ENCODE measurements at regions of chr12 and their contacts with region 1.

Region 1: GRCh38 chr12:56688129-56688845 is at the start of gene PTGES3:
- DNase-seq: peak; percentile 93 to 99 (median 96)
- ATAC-seq: peak; percentile 74
- H3K4me3 ChIP-seq: peak within 1 kb of the TSS; percentile 97
- H3K27ac ChIP-seq: peak within 1 kb of the TSS; percentile 99
- H3K4me1 ChIP-seq: peaks cover 0 to 25% of the 10 kb centered on the region in 2 experiments; a peak in 4 of 5 replicates
- H3K27me3 ChIP-seq: no peaks in the 10 kb centered on the region
- CTCF ChIP-seq: 0 out of 6 replicates have a peak, but pooled peaks of 1 of the 3 experiments have one; percentile 10
- EP300 ChIP-seq: peak; percentile 57
- POLR2A ChIP-seq: peak; percentile 98
- RAD21 ChIP-seq: no peak
- polyA plus RNA-seq, gene PTGES3: 163 to 185 TPM

Region 2: DNA sequence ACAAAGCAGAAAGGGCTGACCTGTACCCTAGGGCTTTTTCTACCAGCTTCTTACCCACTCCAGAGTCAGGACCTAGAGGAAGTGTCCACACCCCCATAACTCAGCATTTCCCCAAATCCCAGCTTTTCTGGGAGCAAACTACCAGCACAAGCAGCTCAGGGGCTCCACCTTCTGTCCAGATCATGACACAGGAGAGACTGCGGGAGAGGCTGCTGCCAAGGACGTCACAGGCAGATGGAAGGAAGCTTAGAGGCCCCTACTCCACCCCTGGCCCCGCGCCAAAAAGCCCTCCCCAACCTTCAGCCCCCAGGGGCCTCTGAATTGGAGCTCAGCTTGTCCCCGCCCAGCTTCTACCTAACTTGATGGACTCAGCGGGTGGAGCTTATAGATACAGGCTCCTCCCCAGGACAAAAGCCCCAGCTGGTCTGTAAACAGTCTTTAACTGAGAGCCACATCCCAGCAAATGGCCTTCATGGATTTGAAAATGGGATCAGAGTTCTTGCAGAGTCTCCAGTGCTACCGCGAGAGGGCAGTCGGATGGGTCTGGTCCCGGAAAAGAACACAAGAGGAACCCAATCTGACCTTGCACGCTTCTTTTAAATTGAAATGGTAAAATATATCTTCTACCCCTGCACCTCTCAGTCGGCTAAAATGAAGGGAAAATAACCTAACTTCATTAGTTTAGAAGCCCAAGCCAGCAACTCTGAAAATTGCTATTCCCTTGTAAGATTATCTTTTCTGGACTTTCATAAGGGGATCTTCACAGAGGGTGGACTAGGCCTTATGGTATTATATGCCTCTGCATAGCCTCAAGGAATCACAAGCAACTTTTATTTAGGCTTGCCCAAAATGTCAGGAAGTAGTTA is 51.4 kb before region 1 on chr12:
- CTCF ChIA-PET with region 1: interaction called, 4 read pairs
- POLR2A ChIA-PET with region 1: interaction called, 19 read pairs
- in situ Hi-C with region 1: no loop called
- intact Hi-C with region 1: loop called (anchors 2 kb)
- DNase-seq: peak; percentile 90 to 100 (median 94)
- ATAC-seq: peak; percentile 84
- H3K4me3 ChIP-seq: peak overlapping the region; percentile 85
- H3K27ac ChIP-seq: peak overlapping the region; percentile 86
- H3K4me1 ChIP-seq: peaks cover 23 to 38% of the 10 kb centered on the region in 2 experiments
- H3K27me3 ChIP-seq: no peaks in the 10 kb centered on the region
- CTCF ChIP-seq: peak; percentile 79 to 91 (median 88)
- EP300 ChIP-seq: peak; percentile 62
- POLR2A ChIP-seq: peak; percentile 76
- RAD21 ChIP-seq: peak; percentile 66 to 87

Region 3: DNA sequence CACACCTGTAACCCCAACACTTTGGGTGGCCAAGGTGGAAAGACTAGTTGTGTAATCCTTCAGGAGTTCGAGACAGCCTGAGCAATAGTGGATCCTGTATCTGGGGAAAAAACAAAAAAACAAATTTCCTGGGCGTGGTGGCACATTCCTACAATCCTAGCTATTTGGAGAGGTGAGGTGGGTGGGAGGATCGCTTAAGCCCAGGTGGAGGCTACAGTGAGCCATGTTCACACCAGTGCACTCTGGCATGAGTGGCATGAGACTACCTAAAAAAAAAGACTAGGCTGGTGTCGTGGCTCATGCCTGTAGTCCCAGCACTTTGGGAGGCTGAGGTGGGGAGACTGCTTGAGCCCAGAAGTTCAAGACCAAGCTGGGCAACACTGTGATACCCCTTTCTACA is 17.5 kb before region 1 on chr12:
- CTCF ChIA-PET with region 1: no interaction called
- POLR2A ChIA-PET with region 1: interaction called, 28 read pairs
- in situ Hi-C with region 1: no loop called
- intact Hi-C with region 1: no loop called
- DNase-seq: no peak
- ATAC-seq: no peak
- H3K4me3 ChIP-seq: no peak overlapping the region
- H3K27ac ChIP-seq: no peak overlapping the region
- H3K4me1 ChIP-seq: peaks cover 6 to 25% of the 10 kb centered on the region in 2 experiments; a peak in 4 of 5 replicates
- H3K27me3 ChIP-seq: no peaks in the 10 kb centered on the region
- CTCF ChIP-seq: no peak
- EP300 ChIP-seq: no peak
- POLR2A ChIP-seq: no peak
- RAD21 ChIP-seq: no peak

Region 4: DNA sequence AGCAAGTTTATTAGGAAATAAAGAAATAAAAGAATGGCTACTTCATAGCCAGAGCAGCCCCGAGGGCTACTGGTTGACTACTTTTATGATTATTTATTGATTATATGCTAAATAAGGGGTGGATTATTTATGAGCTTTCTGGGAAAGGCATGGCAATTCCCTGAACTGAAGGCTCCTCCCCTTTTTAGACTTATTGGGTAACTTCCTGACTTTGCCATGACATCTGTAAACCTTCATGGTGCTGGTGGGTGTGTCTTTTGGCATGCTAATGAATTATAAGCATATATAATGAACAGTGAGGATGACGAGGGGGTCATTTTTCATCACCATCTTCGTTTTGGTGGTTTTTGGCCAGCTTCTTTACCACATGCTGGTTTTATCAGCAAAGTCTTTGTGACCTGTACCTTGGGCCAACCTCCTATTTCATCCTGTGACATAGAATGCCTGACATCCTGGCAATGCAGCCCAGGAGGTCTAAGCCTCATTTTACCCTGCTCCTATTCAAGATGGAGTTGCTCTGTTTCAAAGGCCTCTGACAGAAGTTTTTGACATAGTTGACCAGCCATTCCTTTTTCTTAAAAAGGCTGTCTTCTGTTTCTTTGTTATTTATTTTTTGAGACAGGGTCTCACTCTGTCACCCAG is 10.9 kb after region 1 on chr12:
- CTCF ChIA-PET with region 1: no interaction called
- POLR2A ChIA-PET with region 1: interaction called, 13 read pairs
- in situ Hi-C with region 1: no loop called
- intact Hi-C with region 1: loop called (anchors 1 kb)
- DNase-seq: peak in 2 of 4 experiments; percentile 58 to 81
- ATAC-seq: peak; percentile 79
- H3K4me3 ChIP-seq: no peak overlapping the region
- H3K27ac ChIP-seq: peak overlapping the region; percentile 80
- H3K4me1 ChIP-seq: peaks cover 28 to 35% of the 10 kb centered on the region in 2 experiments
- H3K27me3 ChIP-seq: no peaks in the 10 kb centered on the region
- CTCF ChIP-seq: no peak
- EP300 ChIP-seq: peak; percentile 36
- POLR2A ChIP-seq: no peak
- RAD21 ChIP-seq: no peak

Region 5: DNA sequence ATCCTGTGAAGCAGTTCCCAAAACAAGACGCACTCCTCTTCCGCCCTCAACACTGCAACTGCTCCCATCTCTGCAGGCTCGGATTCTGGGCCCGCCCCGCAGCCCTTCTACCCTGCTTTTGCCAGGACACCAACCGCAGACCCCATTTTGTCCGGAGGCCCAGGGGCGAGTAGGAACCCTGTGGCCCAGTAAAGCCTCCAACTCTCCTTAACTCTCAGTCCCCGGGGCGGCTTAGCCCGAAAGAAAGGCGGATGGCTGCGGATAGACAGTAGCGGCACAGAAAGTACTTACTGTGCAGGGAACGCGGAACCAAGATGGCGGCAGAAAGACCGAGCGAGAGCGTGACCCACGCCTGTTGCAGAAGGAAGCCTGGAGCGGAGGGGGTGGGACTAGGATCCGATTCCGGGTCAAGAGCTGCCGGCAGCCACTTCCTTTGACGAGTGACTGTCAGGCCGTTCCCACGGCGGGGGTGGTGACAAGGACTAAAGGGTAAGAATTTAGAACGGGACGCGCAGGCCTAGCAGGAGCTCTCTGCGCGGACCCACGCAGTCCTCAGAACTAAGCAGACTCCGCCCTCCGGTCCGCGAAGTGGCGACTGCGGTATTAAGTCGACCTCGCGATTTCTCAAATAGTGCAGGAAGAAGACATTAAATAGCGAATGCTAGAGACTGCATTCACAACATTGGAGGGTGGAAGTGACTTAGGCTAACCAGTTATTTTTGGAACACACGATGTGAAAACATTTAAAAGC is 36.9 kb after region 1 on chr12 and contains the start of gene NACA:
- CTCF ChIA-PET with region 1: no interaction called
- POLR2A ChIA-PET with region 1: interaction called, 13 read pairs
- in situ Hi-C with region 1: no loop called
- intact Hi-C with region 1: loop called (anchors 1 kb)
- DNase-seq: peak; percentile 95 to 99 (median 96)
- ATAC-seq: peak; percentile 93
- H3K4me3 ChIP-seq: peak within 1 kb of the TSS; percentile 89
- H3K27ac ChIP-seq: peak within 1 kb of the TSS; percentile 97
- H3K4me1 ChIP-seq: peaks cover 14 to 29% of the 10 kb centered on the region in 2 experiments
- H3K27me3 ChIP-seq: no peaks in the 10 kb centered on the region
- CTCF ChIP-seq: no peak
- EP300 ChIP-seq: peak; percentile 3; the same call in 1 of the 2 replicates
- POLR2A ChIP-seq: peak; percentile 99
- RAD21 ChIP-seq: peak in 1 of 2 experiments; percentile 21; a peak in 2 of 4 replicates
- polyA plus RNA-seq, gene NACA: 2,280 to 2,416 TPM

Measured in K562 (cell line).